Naive thymus-derived CD4-positive, alpha-beta T cell (primary cell): ENCODE measurements at regions of chr2 and their contacts with region 1.

Region 1: GRCh38 chr2:198053776-198054698 is 249.6 kb downstream of the PLCL1 start:
- DNase-seq: peak in 8 of 9 donors; percentile 23 to 62 (median 44)
- ATAC-seq: peak; percentile 77
- H3K4me3 ChIP-seq: no peak overlapping the region
- H3K4me3 Mint-ChIP-seq: no peak overlapping the region
- H3K27ac ChIP-seq: no peak overlapping the region
- H3K27ac Mint-ChIP-seq: peak overlapping the region in 4 of 9 donors; percentile 17 to 46 (median 30)
- H3K4me1 ChIP-seq: no peaks in the 10 kb centered on the region
- H3K4me1 Mint-ChIP-seq: peaks cover 3 to 67% (median 36%) of the 10 kb centered on the region in 7 donors
- H3K27me3 ChIP-seq: no peaks in the 10 kb centered on the region
- H3K27me3 Mint-ChIP-seq: no peaks in the 10 kb centered on the region

Region 2: DNA sequence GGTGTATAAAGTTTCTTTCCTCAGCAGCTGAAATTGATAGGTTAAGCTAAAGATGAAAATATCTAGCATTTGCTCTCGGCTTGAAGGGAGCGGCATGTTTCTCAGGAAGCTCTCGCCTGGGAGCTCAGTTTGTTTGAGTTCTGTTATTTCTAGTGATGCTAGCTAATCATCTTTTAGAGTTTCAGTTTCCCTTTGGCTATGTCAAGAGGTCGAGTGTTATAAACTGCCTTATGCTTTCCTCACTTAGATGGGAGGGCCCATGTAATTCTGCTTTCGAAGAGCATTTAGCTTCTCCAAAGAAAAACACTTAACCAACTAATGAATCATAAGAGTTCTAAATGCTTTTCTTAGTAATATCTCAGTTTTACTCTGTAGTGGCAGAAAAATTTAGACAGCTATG is 216.0 kb before region 1 on chr2:
- CTCF ChIA-PET with region 1: interaction called, 5 read pairs
- POLR2A ChIA-PET with region 1: no interaction called
- intact Hi-C with region 1: loop called in 1 of 2 experiments (anchors 1 kb)
- DNase-seq: peak in 7 of 9 donors; percentile 41 to 71 (median 59)
- ATAC-seq: peak; percentile 88
- H3K4me3 ChIP-seq: peak overlapping the region; percentile 31
- H3K4me3 Mint-ChIP-seq: peak overlapping the region; percentile 65 to 84 (median 80)
- H3K27ac ChIP-seq: peak overlapping the region; percentile 75
- H3K27ac Mint-ChIP-seq: peak overlapping the region; percentile 79 to 98 (median 94)
- H3K4me1 ChIP-seq: peaks cover 0 to 55% of the 10 kb centered on the region in 2 donors
- H3K4me1 Mint-ChIP-seq: peaks cover 28 to 88% (median 67%) of the 10 kb centered on the region in 7 donors
- H3K27me3 ChIP-seq: no peaks in the 10 kb centered on the region
- H3K27me3 Mint-ChIP-seq: no peaks in the 10 kb centered on the region

Region 3: GRCh38 chr2:197873293-197873701 is 180.7 kb before region 1 on chr2:
- CTCF ChIA-PET with region 1: no interaction called
- POLR2A ChIA-PET with region 1: no interaction called
- intact Hi-C with region 1: loop called in 1 of 2 experiments (anchors 5 kb)
- DNase-seq: no peak
- ATAC-seq: no peak
- H3K4me3 ChIP-seq: no peak overlapping the region
- H3K4me3 Mint-ChIP-seq: peak overlapping the region in 1 of 10 donors; percentile 33
- H3K27ac ChIP-seq: no peak overlapping the region
- H3K27ac Mint-ChIP-seq: peak overlapping the region in 3 of 9 donors; percentile 28 to 62 (median 47)
- H3K4me1 ChIP-seq: peaks cover 0 to 34% of the 10 kb centered on the region in 2 donors
- H3K4me1 Mint-ChIP-seq: peaks cover 29 to 92% (median 85%) of the 10 kb centered on the region in 7 donors
- H3K27me3 ChIP-seq: no peaks in the 10 kb centered on the region
- H3K27me3 Mint-ChIP-seq: no peaks in the 10 kb centered on the region

Region 4: GRCh38 chr2:198042189-198042588 is 11.8 kb before region 1 on chr2:
- CTCF ChIA-PET with region 1: no interaction called
- POLR2A ChIA-PET with region 1: interaction called, 7 read pairs
- intact Hi-C with region 1: loop called in 1 of 2 experiments (anchors 2 kb)
- DNase-seq: peak in 5 of 9 donors; percentile 2 to 41 (median 25)
- ATAC-seq: peak; percentile 70
- H3K4me3 ChIP-seq: no peak overlapping the region
- H3K4me3 Mint-ChIP-seq: no peak overlapping the region
- H3K27ac ChIP-seq: no peak overlapping the region
- H3K27ac Mint-ChIP-seq: no peak overlapping the region
- H3K4me1 ChIP-seq: peaks cover 0 to 26% of the 10 kb centered on the region in 2 donors
- H3K4me1 Mint-ChIP-seq: peaks cover 0 to 35% (median 20%) of the 10 kb centered on the region in 7 donors
- H3K27me3 ChIP-seq: no peaks in the 10 kb centered on the region
- H3K27me3 Mint-ChIP-seq: no peaks in the 10 kb centered on the region

Region 5: GRCh38 chr2:198127627-198128026 is 73.6 kb after region 1 on chr2:
- CTCF ChIA-PET with region 1: interaction called, 7 read pairs
- POLR2A ChIA-PET with region 1: no interaction called
- intact Hi-C with region 1: loop called in 1 of 2 experiments (anchors 2 kb)
- DNase-seq: peak in 8 of 9 donors; percentile 24 to 66 (median 48)
- ATAC-seq: peak; percentile 81
- H3K4me3 ChIP-seq: no peak overlapping the region
- H3K4me3 Mint-ChIP-seq: no peak overlapping the region
- H3K27ac ChIP-seq: no peak overlapping the region
- H3K27ac Mint-ChIP-seq: peak overlapping the region in 1 of 9 donors; percentile 10
- H3K4me1 ChIP-seq: no peaks in the 10 kb centered on the region
- H3K4me1 Mint-ChIP-seq: peaks cover 0 to 21% (median 11%) of the 10 kb centered on the region in 7 donors
- H3K27me3 ChIP-seq: no peaks in the 10 kb centered on the region
- H3K27me3 Mint-ChIP-seq: peaks cover 0 to 3% (median 0%) of the 10 kb centered on the region in 5 donors

Region 6: DNA sequence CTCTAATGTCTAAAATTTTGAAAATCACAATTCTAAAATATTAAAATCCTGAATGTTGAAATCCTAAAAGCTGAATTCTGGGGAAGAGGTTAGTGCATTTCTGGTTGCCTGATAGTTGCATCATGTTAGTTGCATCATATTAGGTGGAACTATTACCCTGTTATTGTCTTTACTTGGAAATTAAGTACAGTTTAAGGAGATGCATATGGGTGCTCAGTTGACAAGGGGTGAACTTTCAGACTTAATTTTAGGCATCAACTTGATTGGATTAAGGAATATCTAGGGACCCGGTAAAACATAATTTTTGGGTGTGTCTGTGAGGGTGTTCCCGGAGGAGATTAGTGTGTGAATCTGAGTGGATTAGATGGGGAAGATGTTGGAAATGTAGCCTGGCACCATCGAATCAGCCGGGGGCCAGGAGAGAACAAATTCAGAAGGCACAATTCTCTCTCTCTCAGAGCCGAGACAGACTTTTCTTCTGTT is 160.1 kb after region 1 on chr2:
- CTCF ChIA-PET with region 1: no interaction called
- POLR2A ChIA-PET with region 1: no interaction called
- intact Hi-C with region 1: no loop called
- DNase-seq: no peak
- ATAC-seq: no peak
- H3K4me3 ChIP-seq: no peak overlapping the region
- H3K4me3 Mint-ChIP-seq: no peak overlapping the region
- H3K27ac ChIP-seq: no peak overlapping the region
- H3K27ac Mint-ChIP-seq: no peak overlapping the region
- H3K4me1 ChIP-seq: no peaks in the 10 kb centered on the region
- H3K4me1 Mint-ChIP-seq: no peaks in the 10 kb centered on the region
- H3K27me3 ChIP-seq: no peaks in the 10 kb centered on the region
- H3K27me3 Mint-ChIP-seq: peaks cover 0 to 15% (median 0%) of the 10 kb centered on the region in 5 donors

Region 7: DNA sequence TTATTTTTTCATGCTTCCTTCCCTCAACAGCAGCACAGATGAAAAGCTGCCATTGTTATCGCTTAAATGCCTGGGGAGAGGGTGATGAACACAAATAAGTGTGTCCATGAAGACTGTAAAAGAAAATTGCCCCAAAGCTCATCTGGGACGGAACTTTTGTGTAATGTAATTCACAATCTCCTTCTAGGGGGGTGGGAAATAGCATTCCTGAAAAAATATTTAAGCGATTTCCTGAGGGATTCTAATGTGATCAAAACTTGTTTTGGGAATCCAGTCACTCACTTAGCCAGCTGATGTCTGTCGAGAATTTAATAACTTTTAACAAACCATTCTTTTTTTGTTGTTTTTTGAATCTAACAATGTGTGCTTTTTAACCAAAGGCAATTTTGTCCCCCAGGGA is 178.2 kb after region 1 on chr2:
- CTCF ChIA-PET with region 1: no interaction called
- POLR2A ChIA-PET with region 1: no interaction called
- intact Hi-C with region 1: no loop called
- DNase-seq: no peak
- ATAC-seq: no peak
- H3K4me3 ChIP-seq: no peak overlapping the region
- H3K4me3 Mint-ChIP-seq: no peak overlapping the region
- H3K27ac ChIP-seq: no peak overlapping the region
- H3K27ac Mint-ChIP-seq: no peak overlapping the region
- H3K4me1 ChIP-seq: no peaks in the 10 kb centered on the region
- H3K4me1 Mint-ChIP-seq: peaks cover 0 to 10% (median 5%) of the 10 kb centered on the region in 7 donors
- H3K27me3 ChIP-seq: no peaks in the 10 kb centered on the region
- H3K27me3 Mint-ChIP-seq: peaks cover 9 to 22% (median 12%) of the 10 kb centered on the region in 5 donors